ENCODE measurements at regions of chr13 and their contacts with region 1.

Region 1: GRCh38 chr13:40946485-40946884 is 72.6 kb downstream of the ELF1 start:
- DNase-seq: no peak
- ATAC-seq: no peak
- H3K4me3 ChIP-seq: no peak overlapping the region
- H3K4me3 Mint-ChIP-seq: no peak overlapping the region
- H3K27ac ChIP-seq: no peak overlapping the region
- H3K27ac Mint-ChIP-seq: peak overlapping the region; percentile 70
- H3K4me1 ChIP-seq: no peaks in the 10 kb centered on the region
- H3K4me1 Mint-ChIP-seq: peaks cover 68% of the 10 kb centered on the region
- H3K27me3 ChIP-seq: no peaks in the 10 kb centered on the region
- H3K27me3 Mint-ChIP-seq: no peaks in the 10 kb centered on the region
- CTCF ChIP-seq: no peak

Region 2: GRCh38 chr13:40992678-40993518 is 46.4 kb after region 1 on chr13:
- CTCF ChIA-PET with region 1: interaction called, 6 read pairs
- POLR2A ChIA-PET with region 1: interaction called, 3 read pairs
- intact Hi-C with region 1: loop called in 1 of 2 experiments (anchors 5 kb)
- DNase-seq: peak in 3 of 14 experiments; percentile 40 to 63 (median 62)
- ATAC-seq: peak; percentile 52
- H3K4me3 ChIP-seq: no peak overlapping the region
- H3K4me3 Mint-ChIP-seq: peak overlapping the region; percentile 16
- H3K27ac ChIP-seq: peak overlapping the region; percentile 49 to 55
- H3K27ac Mint-ChIP-seq: peak overlapping the region; percentile 84
- H3K4me1 ChIP-seq: peaks cover 50% of the 10 kb centered on the region
- H3K4me1 Mint-ChIP-seq: peaks cover 92% of the 10 kb centered on the region
- H3K27me3 ChIP-seq: no peaks in the 10 kb centered on the region
- H3K27me3 Mint-ChIP-seq: no peaks in the 10 kb centered on the region
- CTCF ChIP-seq: peak; percentile 40